ENCODE measurements at regions of chr3 and their contacts with region 1.

Region 1: GRCh38 chr3:177347611-177348010 is 150.3 kb upstream of the TBL1XR1 start:
- DNase-seq: no peak
- H3K4me3 ChIP-seq: no peak overlapping the region
- H3K27me3 ChIP-seq: no peaks in the 10 kb centered on the region
- CTCF ChIP-seq: no peak

Region 2: GRCh38 chr3:177333533-177334520 is 13.8 kb before region 1 on chr3:
- CTCF ChIA-PET with region 1: no interaction called
- POLR2A ChIA-PET with region 1: interaction called, 21 read pairs
- DNase-seq: no peak
- H3K4me3 ChIP-seq: no peak overlapping the region
- H3K27me3 ChIP-seq: no peaks in the 10 kb centered on the region
- CTCF ChIP-seq: no peak

Region 3: GRCh38 chr3:177538750-177539730 is 191.4 kb after region 1 on chr3:
- CTCF ChIA-PET with region 1: no interaction called
- POLR2A ChIA-PET with region 1: no interaction called
- DNase-seq: no peak
- H3K4me3 ChIP-seq: no peak overlapping the region
- H3K27me3 ChIP-seq: no peaks in the 10 kb centered on the region
- CTCF ChIP-seq: no peak

Measured in BJ (cell line).